Activated CD8-positive, alpha-beta T cell treated with anti-CD3 and anti-CD28 coated beads for 36 hours (primary cell): ENCODE measurements at regions of chr15 and their contacts with region 1.

Region 1: DNA sequence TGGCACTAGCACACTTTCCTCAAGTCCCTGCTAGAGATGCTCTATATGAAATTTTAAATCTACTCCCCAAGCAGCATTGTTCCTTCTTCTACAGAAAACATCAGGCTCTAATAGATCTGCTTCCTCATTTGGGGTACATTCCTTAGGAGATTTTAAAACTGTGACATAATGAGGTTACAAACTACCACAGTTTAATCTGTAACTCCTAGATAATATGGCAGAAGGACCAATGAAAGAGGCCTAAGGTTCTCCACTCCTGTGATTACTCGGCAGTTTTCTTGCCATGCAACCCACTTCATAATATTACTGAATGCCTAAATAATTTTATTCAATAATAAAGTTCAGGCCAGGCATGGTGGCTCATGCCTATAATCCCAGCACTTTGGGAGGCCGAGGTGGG is 16.1 kb downstream of the ZNF106 start:
- DNase-seq: no peak
- ATAC-seq: no peak
- H3K4me3 Mint-ChIP-seq: no peak overlapping the region
- H3K27ac Mint-ChIP-seq: no peak overlapping the region
- H3K4me1 Mint-ChIP-seq: peaks cover 4% of the 10 kb centered on the region
- H3K27me3 Mint-ChIP-seq: no peaks in the 10 kb centered on the region
- CTCF ChIP-seq: no peak

Region 2: DNA sequence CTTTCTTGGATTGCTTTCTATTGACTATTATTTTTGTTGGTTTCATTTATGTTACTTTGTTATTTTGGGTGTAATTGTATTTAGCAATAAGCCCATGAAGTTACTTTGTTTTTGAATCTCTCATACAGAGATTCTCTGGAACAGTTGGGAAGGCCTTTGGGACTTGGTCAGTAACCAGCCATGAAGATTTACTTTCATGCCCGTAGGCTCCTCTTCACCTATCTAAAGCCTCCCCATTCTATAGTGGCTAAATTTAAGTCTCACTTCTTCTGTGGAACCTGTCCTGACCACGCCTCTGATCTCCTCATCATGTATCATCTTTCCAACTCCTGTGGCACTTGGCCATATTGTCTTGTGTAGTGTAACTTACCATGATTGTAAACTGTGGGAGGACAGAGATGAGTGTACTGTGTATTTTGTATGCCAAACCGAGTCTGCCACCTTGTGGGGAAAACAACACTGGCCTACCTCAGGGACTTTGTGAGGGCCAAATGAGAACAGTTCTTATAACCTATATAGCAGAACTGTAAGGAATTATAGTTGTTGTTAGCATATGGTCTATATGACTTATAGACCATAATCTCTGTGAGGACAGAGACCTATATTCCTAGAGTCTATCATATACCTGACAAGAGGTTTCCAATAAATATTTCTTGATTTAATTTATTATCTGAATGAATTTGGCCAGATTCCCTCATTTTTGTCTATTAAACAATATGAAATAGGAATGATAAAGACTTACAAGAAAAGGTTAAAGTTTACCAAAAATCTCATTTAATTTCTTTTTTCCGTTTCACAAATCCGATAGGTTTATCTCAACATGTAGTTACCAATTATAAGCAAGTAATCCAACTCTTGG is 175.6 kb after region 1 on chr15:
- CTCF ChIA-PET with region 1: no interaction called
- POLR2A ChIA-PET with region 1: no interaction called
- intact Hi-C with region 1: loop called (anchors 5 kb)
- DNase-seq: peak; percentile 83
- ATAC-seq: peak; percentile 99
- H3K4me3 Mint-ChIP-seq: no peak overlapping the region
- H3K27ac Mint-ChIP-seq: no peak overlapping the region
- H3K4me1 Mint-ChIP-seq: peaks cover 12% of the 10 kb centered on the region
- H3K27me3 Mint-ChIP-seq: no peaks in the 10 kb centered on the region
- CTCF ChIP-seq: peak; percentile 77